Activated T-helper 2 cell treated with anti-CD3 and anti-CD28 coated beads, Interferon-gamma antibody, Interleukin-2, Interleukin-4, amounts not matched to agents 10 μg/mL and 5 μg/mL and 100 μg/mL, durations not matched to agents 14 hours and 24 hours and 36 hours (primary cell): ENCODE measurements at regions of chr6 and their contacts with region 1.

Region 1: DNA sequence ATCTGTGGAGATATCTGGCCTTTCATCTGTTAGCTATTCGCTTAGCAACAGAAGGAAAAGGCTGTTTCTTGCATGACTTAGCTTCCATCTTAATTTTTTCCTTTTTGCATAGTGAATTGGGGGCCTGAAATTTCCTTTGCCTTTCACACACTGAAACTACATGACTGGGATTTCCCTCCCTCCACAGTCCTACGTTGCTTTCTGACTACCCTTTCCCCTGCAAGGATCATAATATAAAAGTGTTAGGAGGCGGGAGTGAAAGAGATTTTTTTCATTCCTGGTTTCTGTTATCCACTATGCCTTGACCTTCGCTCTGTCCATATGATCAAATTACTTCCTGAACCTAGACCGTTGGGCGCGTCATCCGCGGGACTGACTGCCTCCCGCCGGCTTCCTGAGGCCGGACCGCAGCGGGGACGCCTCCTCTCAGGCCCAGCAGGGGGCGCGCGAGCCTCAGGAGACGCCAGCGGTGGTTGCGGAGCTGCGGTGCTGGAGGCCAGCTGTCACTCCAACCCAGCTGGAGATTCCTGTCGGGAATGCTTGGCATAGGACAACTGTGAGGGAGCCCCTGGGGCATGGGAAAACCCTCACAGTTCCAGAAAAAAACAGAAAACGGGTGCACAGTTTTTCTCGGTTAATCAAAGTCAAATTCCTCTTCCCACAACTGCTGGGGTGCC is 55.6 kb downstream of the MEP1A start:
- DNase-seq: peak; percentile 47
- H3K4me3 Mint-ChIP-seq: peak overlapping the region; percentile 27
- H3K27ac Mint-ChIP-seq: no peak overlapping the region
- H3K4me1 Mint-ChIP-seq: peaks cover 5% of the 10 kb centered on the region
- H3K27me3 Mint-ChIP-seq: peaks cover 26% of the 10 kb centered on the region

Region 2: DNA sequence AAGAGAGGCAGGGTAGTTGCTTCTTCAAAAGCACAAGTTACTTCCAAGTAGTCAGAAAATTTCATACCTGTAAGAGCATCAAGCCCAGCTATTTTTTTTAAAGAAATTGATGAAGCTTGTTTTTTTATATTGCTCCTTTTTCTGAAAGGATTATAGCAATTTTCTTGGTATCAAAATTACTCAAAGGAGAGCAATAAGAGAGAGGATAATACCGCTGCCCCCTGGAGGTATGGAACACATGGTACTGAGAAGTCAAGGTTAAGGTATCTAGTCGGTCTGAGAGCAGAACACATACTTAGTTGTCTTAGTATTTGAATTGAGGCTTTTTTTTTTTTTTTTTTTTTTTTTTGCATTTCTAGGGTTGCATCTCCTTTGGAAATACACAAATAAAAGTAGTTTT is 13.6 kb after region 1 on chr6:
- intact Hi-C with region 1: no loop called
- DNase-seq: no peak
- H3K4me3 Mint-ChIP-seq: no peak overlapping the region
- H3K27ac Mint-ChIP-seq: no peak overlapping the region
- H3K4me1 Mint-ChIP-seq: no peaks in the 10 kb centered on the region
- H3K27me3 Mint-ChIP-seq: no peaks in the 10 kb centered on the region

Region 3: GRCh38 chr6:46993846-46994245 is 145.0 kb after region 1 on chr6:
- intact Hi-C with region 1: loop called (anchors 5 kb)
- DNase-seq: no peak
- H3K4me3 Mint-ChIP-seq: no peak overlapping the region
- H3K27ac Mint-ChIP-seq: no peak overlapping the region
- H3K4me1 Mint-ChIP-seq: no peaks in the 10 kb centered on the region
- H3K27me3 Mint-ChIP-seq: peaks cover 2% of the 10 kb centered on the region

Region 4: DNA sequence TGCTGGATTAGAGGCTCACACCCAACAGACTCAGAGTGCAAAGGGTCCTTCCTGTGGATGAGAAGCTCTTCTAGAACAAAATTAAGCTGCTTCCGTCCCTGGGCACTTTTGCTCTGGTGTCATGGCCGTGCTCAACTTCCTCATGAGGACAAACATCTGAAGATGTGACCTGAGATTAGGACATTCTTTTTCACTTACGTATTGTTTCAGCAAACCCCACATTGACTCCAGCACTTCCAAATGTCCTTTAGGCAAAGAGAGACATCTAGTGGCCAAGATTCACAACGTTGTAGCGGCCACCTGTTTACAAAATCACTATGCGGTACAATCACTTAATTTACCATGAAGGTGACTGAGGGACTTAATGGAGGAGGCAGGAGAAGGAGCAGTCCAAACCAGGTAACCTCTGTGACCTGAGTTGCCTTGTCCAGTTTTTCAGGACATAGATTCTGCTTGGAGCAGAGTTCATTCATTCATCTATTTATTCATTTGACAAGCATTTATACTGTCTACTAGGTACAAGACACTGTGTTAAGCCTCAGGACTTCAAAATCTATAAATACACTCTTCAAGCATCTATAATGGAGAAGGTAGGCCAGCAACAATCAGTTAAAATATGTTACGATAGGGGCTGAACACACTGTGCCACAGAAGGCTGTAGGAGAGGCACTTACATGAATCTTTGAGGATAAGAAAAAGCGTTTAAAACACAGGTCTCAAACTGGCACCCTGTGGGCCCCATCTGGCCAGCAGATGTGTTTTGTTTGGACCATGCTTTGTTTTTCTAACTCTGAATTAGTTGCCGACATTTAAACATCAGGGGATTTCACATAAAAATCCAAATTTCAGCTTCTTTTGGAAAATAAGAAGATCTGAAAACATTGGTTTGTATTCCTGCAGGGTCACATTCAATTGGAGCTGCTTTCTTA is 198.9 kb after region 1 on chr6:
- intact Hi-C with region 1: loop called (anchors 1 kb)
- DNase-seq: peak; percentile 12
- H3K4me3 Mint-ChIP-seq: no peak overlapping the region
- H3K27ac Mint-ChIP-seq: no peak overlapping the region
- H3K4me1 Mint-ChIP-seq: peaks cover 2% of the 10 kb centered on the region
- H3K27me3 Mint-ChIP-seq: no peaks in the 10 kb centered on the region

Region 5: DNA sequence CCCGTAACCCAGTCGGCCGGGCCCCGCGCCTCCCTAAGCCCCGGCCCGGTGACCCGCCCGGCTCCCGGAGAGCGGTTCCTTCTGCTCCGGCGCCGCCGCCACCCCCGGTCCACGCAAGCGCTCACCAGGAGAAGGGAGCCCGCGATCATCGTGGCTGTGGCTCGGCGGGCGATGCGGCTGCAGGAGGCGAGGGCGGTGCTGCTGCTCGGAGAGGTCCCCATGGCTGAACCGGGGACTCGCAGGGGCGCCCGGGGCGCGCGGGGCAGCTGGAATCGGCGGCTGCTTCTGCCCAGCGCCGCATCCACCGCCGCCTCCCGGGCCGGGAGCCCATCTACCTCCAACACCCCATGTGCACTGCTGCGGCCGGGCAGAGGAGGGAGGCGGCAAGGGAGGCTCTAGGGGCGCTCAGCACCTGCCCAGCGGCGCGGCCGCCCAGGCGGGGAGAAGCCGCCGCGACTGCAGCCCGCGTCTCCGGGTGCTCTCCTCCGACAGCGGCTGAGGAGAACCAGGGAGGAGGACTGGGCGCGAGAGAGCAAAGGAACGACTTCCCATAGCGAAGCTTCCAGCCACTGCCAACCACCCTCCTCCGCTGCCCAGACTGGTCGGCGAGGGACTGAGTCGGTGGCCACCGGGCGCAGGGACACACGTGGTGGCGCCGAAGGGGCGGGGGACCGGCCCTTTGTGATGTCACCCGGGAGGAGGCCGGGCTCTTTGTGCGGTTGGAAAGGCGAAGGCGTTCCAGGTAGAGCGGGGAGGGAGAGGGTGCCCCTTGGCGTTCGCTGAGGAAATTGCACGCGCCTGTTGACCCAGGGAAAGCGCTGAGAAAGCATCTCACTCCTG is 460.7 kb after region 1 on chr6 and contains the start of gene TNFRSF21:
- intact Hi-C with region 1: loop called (anchors 2 kb)
- DNase-seq: peak; percentile 78
- H3K4me3 Mint-ChIP-seq: peak within 1 kb of the TSS; percentile 62
- H3K27ac Mint-ChIP-seq: no peak within 1 kb of the TSS
- H3K4me1 Mint-ChIP-seq: peaks cover 10% of the 10 kb centered on the region
- H3K27me3 Mint-ChIP-seq: peaks cover 58% of the 10 kb centered on the region
- total RNA-seq, gene TNFRSF21: 2.7 and 2.8 TPM in 2 replicates